Dorsolateral prefrontal cortex (tissue), 120 donors: ENCODE measurements at regions of chr14 and their contacts with region 1.

Region 1: GRCh38 chr14:73058224-73058921 is at the start of gene RBM25:
- DNase-seq: peak; percentile 94 to 99 (median 96)
- H3K4me3 ChIP-seq: peak within 1 kb of the TSS; percentile 59 to 98 (median 89)
- H3K27ac ChIP-seq: peak within 1 kb of the TSS; percentile 79 to 99 (median 96)
- H3K27me3 ChIP-seq: no peaks in the 10 kb centered on the region
- CTCF ChIP-seq: peak in 54 of 56 donors; percentile 34 to 80 (median 55)
- total RNA-seq, gene RBM25: 73.2 to 124 (median 94.5) TPM

Region 2: DNA sequence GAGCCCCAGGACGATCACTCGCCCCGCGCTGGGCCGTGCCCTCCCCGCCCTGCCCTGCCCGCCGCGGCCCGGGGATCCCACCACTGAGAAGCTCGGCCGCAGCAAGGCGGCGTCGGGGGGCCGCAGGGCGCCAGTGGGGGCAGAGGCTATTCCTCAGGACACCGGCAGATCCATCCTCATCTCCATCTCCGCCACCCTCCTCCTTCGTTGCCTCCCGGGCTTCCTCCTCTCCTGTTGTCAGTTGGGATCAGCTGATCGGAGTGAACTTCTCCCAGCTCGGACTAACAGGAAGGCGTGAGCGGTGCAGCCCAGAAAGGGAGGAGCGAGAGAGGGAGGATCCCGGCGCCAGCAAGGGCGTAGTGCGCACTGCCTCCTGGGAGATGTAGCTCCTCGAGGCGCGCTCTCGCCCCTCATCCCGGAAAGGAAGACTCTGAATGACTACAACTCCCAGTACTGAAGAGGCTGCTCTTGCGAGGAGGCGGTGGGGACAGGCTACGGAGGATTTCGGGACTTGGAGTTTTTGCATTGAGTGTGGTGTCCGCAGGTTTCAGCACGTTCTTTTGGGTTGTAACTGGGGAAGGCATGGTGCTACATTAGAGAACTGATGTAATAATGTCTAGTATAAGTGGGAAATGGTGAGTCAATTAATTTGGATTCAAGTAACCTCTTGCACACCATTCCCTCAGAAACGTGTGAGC is 31.4 kb before region 1 on chr14 and contains the start of gene ZFYVE1:
- intact Hi-C with region 1: loop called (anchors 1 kb)
- DNase-seq: peak; percentile 95 to 99 (median 98)
- H3K4me3 ChIP-seq: peak within 1 kb of the TSS; percentile 65 to 91 (median 81)
- H3K27ac ChIP-seq: peak within 1 kb of the TSS in 57 of 59 donors; percentile 11 to 94 (median 85)
- H3K27me3 ChIP-seq: no peaks in the 10 kb centered on the region
- CTCF ChIP-seq: peak in 37 of 56 donors; percentile 8 to 61 (median 32)
- total RNA-seq, gene ZFYVE1: 21.3 to 38.9 (median 28.9) TPM

Region 3: GRCh38 chr14:73173092-73173735 is 114.8 kb after region 1 on chr14:
- intact Hi-C with region 1: loop called (anchors 5 to 10 kb)
- DNase-seq: no peak
- H3K4me3 ChIP-seq: no peak overlapping the region
- H3K27ac ChIP-seq: peak overlapping the region in 52 of 59 donors; percentile 6 to 99 (median 92)
- H3K27me3 ChIP-seq: no peaks in the 10 kb centered on the region
- CTCF ChIP-seq: peak; percentile 32 to 76 (median 62)

Region 4: GRCh38 chr14:73283608-73284379 is 225.4 kb after region 1 on chr14:
- intact Hi-C with region 1: loop called (anchors 5 to 10 kb)
- DNase-seq: peak in 4 of 10 donors; percentile 40 to 53 (median 46)
- H3K4me3 ChIP-seq: no peak overlapping the region
- H3K27ac ChIP-seq: peak overlapping the region in 2 of 59 donors; percentile 4 to 7
- H3K27me3 ChIP-seq: no peaks in the 10 kb centered on the region
- CTCF ChIP-seq: peak in 50 of 56 donors; percentile 23 to 74 (median 51)

Region 5: GRCh38 chr14:73491256-73492042 is 433.1 kb after region 1 on chr14:
- intact Hi-C with region 1: loop called in 1 of 2 experiments (anchors 10 kb)
- DNase-seq: peak in 9 of 10 donors; percentile 33 to 72 (median 61)
- H3K4me3 ChIP-seq: peak overlapping the region; percentile 62 to 90 (median 80)
- H3K27ac ChIP-seq: peak overlapping the region in 57 of 59 donors; percentile 19 to 93 (median 84)
- H3K27me3 ChIP-seq: no peaks in the 10 kb centered on the region
- CTCF ChIP-seq: no peak

Region 6: GRCh38 chr14:74018586-74019407 is 960.4 kb after region 1 on chr14 and contains the starts of genes BBOF1 and ENTPD5:
- intact Hi-C with region 1: loop called in 1 of 2 experiments (anchors 5 kb)
- DNase-seq: peak; percentile 73 to 94 (median 83)
- H3K4me3 ChIP-seq: peak within 1 kb of the TSS; percentile 66 to 98 (median 92)
- H3K27ac ChIP-seq: peak within 1 kb of the TSS; percentile 59 to 98 (median 90)
- H3K27me3 ChIP-seq: no peaks in the 10 kb centered on the region
- CTCF ChIP-seq: peak in 18 of 56 donors; percentile 4 to 41 (median 19)
- total RNA-seq, gene BBOF1: 4.1 to 17.0 (median 9.4) TPM
- total RNA-seq, gene ENTPD5: 6.0 to 19.1 (median 11.0) TPM